GM10248 (cell line): ENCODE measurements at regions of chr15 and their contacts with region 1.

Region 1: GRCh38 chr15:34109797-34110663 is 8.1 kb downstream of the PGBD4 start:
- DNase-seq: peak; percentile 31
- CTCF ChIP-seq: peak; percentile 66

Region 2: GRCh38 chr15:34065941-34066340 is 44.1 kb before region 1 on chr15:
- CTCF ChIA-PET with region 1: interaction called, 12 read pairs
- POLR2A ChIA-PET with region 1: no interaction called
- DNase-seq: no peak
- CTCF ChIP-seq: no peak

Region 3: DNA sequence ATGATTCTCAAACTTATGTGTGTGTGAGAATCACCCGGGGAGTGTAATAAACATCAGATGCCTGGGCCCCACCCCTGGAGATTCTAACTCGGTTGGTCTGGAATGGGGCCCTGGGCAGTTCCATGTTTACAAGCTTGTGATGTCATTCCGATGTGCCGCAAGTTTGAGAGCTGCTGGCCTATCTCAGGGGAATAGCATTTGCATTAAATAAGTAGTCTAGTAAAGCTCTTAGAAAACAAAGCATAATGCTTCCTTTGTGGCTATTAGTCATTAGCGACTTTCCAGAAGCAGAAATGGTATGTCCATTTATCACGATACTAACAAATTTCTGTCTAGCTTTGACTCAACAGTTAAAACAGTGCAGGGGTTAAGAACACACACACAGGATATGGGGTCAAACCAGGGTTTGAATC is 12.7 kb after region 1 on chr15:
- CTCF ChIA-PET with region 1: interaction called, 21 read pairs
- POLR2A ChIA-PET with region 1: no interaction called
- DNase-seq: peak; percentile 15
- CTCF ChIP-seq: no peak

Region 4: GRCh38 chr15:34217587-34218225 is 107.7 kb after region 1 on chr15:
- CTCF ChIA-PET with region 1: interaction called, 30 read pairs
- POLR2A ChIA-PET with region 1: no interaction called
- DNase-seq: no peak
- CTCF ChIP-seq: no peak